Activated T-helper 1 cell treated with anti-CD3 and anti-CD28 coated beads, Interleukin-12 subunit alpha, Interleukin-12 subunit beta, Interleukin-2, Interleukin-4 antibody, amounts not matched to agents 30 ng/mL and 10 ng/mL and 1 ng/mL, durations not matched to agents 14 hours and 24 hours and 36 hours (primary cell): ENCODE measurements at regions of chr3 and their contacts with region 1.

Region 1: DNA sequence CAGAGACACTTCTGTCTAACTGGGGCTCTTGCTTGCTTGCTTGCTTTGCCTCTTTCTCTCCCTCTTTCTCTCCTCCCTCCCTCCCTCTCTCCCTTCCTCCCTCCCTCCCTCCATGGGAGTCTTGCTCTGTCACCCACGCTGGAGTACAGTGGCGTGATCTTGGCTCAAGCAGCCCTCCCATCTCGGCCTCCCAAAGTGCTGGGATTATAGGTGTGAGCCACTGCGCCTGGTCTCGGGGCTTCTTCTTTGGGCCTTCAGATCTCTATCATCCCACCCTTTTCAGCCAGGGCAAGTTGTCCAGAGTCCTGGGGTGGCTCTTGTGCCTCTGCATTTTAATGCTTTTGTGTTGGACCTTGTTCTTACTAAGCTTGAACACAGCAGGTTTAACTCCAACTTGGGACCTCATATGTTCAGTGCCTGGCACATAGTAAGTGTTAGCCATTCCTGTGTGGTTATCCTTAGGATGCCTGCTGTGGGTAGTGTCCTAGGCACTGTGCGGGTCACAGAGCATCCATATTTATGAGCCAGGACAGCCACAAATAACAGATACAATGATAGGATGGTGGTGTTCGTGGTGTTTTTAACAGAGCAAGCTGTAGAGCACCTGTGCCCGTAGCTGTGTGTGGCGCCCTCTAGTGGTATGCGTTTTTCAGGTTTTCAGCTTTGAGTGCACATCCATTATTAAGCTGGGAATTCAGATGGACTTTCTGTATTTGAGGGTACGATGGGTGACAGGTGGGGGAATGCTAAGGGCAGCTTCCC is 75.1 kb downstream of the CCK start:
- DNase-seq: peak; percentile 42
- H3K4me3 Mint-ChIP-seq: no peak overlapping the region
- H3K27ac Mint-ChIP-seq: no peak overlapping the region
- H3K4me1 Mint-ChIP-seq: peaks cover 30% of the 10 kb centered on the region
- H3K27me3 Mint-ChIP-seq: no peaks in the 10 kb centered on the region

Region 2: DNA sequence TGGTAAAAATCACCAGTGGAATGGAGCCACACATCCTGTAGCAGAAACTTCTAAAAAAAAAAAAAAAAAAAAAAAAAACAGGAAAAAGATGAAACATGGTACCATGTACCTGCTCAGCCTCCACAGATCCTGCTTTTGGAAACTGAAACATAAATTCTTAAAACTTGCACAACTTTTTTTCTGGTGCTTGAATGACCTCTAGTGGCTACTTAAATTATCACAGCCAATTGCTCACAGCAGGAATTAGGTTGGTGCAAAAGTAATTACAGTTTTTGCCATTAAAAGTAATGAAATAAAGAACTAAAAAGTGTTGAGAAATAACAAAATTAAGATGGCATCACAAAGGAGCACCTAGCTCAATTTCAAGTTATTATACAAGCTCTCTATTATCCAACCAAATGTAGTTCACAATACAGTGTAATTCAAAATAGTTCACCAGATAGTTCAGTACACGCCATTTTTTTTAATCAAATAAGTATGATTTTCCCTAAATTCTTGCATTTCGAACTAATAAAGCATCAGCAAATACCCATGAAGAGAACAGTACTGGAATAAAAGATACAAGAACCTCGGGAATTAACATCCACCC is 309.6 kb before region 1 on chr3:
- intact Hi-C with region 1: no loop called
- DNase-seq: no peak
- H3K4me3 Mint-ChIP-seq: no peak overlapping the region
- H3K27ac Mint-ChIP-seq: no peak overlapping the region
- H3K4me1 Mint-ChIP-seq: no peaks in the 10 kb centered on the region
- H3K27me3 Mint-ChIP-seq: peaks cover 1% of the 10 kb centered on the region

Region 3: GRCh38 chr3:41893977-41894376 is 296.9 kb before region 1 on chr3:
- intact Hi-C with region 1: loop called (anchors 1 kb)
- DNase-seq: no peak
- H3K4me3 Mint-ChIP-seq: no peak overlapping the region
- H3K27ac Mint-ChIP-seq: no peak overlapping the region
- H3K4me1 Mint-ChIP-seq: no peaks in the 10 kb centered on the region
- H3K27me3 Mint-ChIP-seq: no peaks in the 10 kb centered on the region

Region 4: GRCh38 chr3:42118762-42119361 is 72.0 kb before region 1 on chr3:
- intact Hi-C with region 1: loop called (anchors 1 kb)
- DNase-seq: peak; percentile 4
- H3K4me3 Mint-ChIP-seq: no peak overlapping the region
- H3K27ac Mint-ChIP-seq: no peak overlapping the region
- H3K4me1 Mint-ChIP-seq: peaks cover 32% of the 10 kb centered on the region
- H3K27me3 Mint-ChIP-seq: no peaks in the 10 kb centered on the region